CD8-positive, alpha-beta T cell (primary cell): ENCODE measurements at regions of chr11 and their contacts with region 1.

Region 1: DNA sequence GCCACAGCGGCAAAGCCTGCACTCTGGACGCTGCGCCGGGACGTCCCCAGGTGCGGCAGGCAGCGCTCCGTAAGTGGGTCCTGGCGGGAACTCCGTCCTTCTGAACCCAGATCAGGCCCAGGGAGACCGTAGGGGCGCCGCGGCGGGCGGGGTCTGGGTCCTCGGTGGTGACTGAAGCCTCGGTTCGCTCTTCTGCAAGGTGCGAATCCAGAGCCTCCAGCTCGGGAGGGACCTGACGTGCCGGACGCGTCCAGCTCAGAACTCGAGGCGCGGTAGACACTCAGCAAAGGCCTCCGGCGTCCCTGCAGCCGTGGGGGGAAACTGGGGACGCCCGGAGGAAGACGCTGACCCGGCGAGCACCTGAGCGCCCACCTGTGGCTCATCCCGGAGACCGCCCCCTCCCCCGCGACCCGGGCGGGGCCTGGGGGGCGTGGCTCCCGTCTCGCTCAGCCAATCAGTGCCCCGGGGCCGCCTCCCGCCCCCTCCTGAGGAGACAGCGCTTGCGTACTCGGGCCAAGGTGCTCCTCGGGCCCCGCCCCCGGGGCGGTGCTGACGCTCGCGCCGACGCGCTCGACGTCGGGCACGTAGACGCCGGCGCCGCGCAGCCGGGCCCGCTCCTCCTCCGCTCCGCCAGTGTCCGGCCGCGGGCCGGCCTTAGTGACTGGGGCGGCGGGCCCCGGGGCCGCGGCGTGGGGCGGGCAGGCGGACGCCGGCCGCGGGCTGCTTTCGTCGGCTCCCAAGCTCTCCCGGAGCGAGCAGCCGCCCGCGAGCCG is at the start of gene PPFIA1:
- DNase-seq: peak; percentile 89 to 98 (median 96)
- ATAC-seq: peak; percentile 96
- H3K4me3 ChIP-seq: peak within 1 kb of the TSS; percentile 88 to 90
- H3K4me3 Mint-ChIP-seq: peak within 1 kb of the TSS; percentile 89
- H3K27ac ChIP-seq: peak within 1 kb of the TSS; percentile 53 to 55
- H3K27ac Mint-ChIP-seq: peak within 1 kb of the TSS; percentile 84
- H3K4me1 ChIP-seq: peaks cover 10% of the 10 kb centered on the region
- H3K4me1 Mint-ChIP-seq: peaks cover 44% of the 10 kb centered on the region
- H3K27me3 ChIP-seq: peaks cover 0 to 6% of the 10 kb centered on the region in 2 experiments
- H3K27me3 Mint-ChIP-seq: peaks cover 13% of the 10 kb centered on the region
- CTCF ChIP-seq: peak; percentile 2
- total RNA-seq, gene PPFIA1: 36.3 to 40.4 TPM

Region 2: GRCh38 chr11:68878022-68878421 is 1392.3 kb before region 1 on chr11:
- CTCF ChIA-PET with region 1: no interaction called
- POLR2A ChIA-PET with region 1: no interaction called
- intact Hi-C with region 1: no loop called
- DNase-seq: no peak
- ATAC-seq: no peak
- H3K4me3 ChIP-seq: no peak overlapping the region
- H3K4me3 Mint-ChIP-seq: no peak overlapping the region
- H3K27ac ChIP-seq: no peak overlapping the region
- H3K27ac Mint-ChIP-seq: no peak overlapping the region
- H3K4me1 ChIP-seq: no peaks in the 10 kb centered on the region
- H3K4me1 Mint-ChIP-seq: no peaks in the 10 kb centered on the region
- H3K27me3 ChIP-seq: no peaks in the 10 kb centered on the region
- H3K27me3 Mint-ChIP-seq: no peaks in the 10 kb centered on the region
- CTCF ChIP-seq: no peak

Region 3: DNA sequence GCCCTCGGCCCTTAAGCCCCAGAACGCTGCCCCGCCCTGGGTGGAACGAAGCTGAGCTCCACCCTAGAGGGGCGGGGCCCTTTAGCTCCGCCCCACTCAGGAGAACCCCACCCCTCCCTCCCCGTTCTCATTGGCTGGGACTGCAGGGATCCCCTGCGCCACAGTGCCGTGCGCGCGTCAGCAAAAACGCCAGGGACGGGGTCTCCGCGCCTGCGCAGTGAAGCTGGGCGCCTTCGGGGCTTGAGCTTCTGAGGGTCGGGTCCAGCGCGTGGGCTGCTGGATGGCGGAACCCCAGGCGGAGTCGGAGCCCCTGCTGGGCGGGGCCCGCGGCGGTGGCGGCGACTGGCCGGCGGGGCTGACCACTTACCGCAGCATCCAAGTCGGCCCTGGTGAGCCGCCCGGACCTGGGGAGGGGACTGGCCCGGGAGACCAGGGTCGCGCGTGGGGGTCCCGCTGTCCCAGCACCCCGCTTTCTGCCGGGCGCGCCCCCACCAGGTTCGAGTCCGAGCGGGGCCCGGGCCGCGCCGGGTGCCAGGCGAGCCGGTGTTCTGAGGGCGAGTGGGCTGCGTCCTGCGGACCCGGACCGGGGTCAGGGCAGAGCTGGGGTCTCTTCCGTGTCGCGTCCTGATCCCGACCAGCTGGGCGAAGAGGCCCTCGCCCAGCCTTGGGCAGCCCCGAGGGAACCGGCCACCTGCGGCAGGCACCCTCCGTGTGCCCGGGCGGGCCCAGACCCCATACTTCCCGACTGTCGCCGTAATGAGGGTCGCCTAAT is 1221.4 kb before region 1 on chr11 and contains the start of gene TPCN2:
- CTCF ChIA-PET with region 1: no interaction called
- POLR2A ChIA-PET with region 1: no interaction called
- intact Hi-C with region 1: loop called in 1 of 2 experiments (anchors 5 kb)
- DNase-seq: peak; percentile 79 to 98 (median 89)
- ATAC-seq: peak; percentile 98
- H3K4me3 ChIP-seq: peak within 1 kb of the TSS; percentile 61 to 70
- H3K4me3 Mint-ChIP-seq: peak within 1 kb of the TSS; percentile 79
- H3K27ac ChIP-seq: peak within 1 kb of the TSS; percentile 74 to 91
- H3K27ac Mint-ChIP-seq: peak within 1 kb of the TSS; percentile 92
- H3K4me1 ChIP-seq: peaks cover 9% of the 10 kb centered on the region
- H3K4me1 Mint-ChIP-seq: peaks cover 28% of the 10 kb centered on the region
- H3K27me3 ChIP-seq: no peaks in the 10 kb centered on the region
- H3K27me3 Mint-ChIP-seq: no peaks in the 10 kb centered on the region
- CTCF ChIP-seq: no peak
- total RNA-seq, gene TPCN2: 13.1 to 15.0 TPM

Region 4: DNA sequence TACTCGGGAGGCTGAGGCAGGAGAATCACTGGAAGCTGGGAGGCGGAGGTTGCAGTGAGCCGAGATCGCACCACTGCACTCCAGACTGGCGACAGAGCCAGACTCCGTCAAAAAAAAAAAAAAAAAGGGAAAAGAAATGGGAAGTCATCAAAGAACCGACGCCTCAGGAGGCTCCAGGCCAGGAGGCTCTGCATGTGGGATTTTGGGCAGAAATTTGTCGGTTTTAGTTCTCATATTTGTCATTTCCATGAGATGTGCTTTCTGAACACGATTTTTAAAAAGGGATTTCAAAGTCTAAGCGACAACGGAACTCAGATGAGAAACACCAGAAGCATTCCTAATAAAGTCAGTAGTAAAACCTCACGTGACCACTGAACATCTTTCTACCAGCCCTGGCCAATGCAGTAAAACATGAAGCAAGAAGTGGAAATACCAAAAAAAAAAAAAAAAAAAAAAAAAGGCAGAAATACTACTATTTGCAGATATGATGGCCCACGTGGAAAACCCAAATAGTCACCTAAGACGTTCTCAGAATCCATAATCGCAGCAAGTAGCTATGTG is 594.4 kb before region 1 on chr11:
- CTCF ChIA-PET with region 1: no interaction called
- POLR2A ChIA-PET with region 1: no interaction called
- intact Hi-C with region 1: loop called (anchors 1 to 5 kb)
- DNase-seq: no peak
- ATAC-seq: no peak
- H3K4me3 ChIP-seq: peak overlapping the region; percentile 68 to 100
- H3K4me3 Mint-ChIP-seq: peak overlapping the region; percentile 94
- H3K27ac ChIP-seq: no peak overlapping the region
- H3K27ac Mint-ChIP-seq: no peak overlapping the region
- H3K4me1 ChIP-seq: peaks cover 31% of the 10 kb centered on the region
- H3K4me1 Mint-ChIP-seq: peaks cover 26% of the 10 kb centered on the region
- H3K27me3 ChIP-seq: no peaks in the 10 kb centered on the region
- H3K27me3 Mint-ChIP-seq: peaks cover 2% of the 10 kb centered on the region
- CTCF ChIP-seq: no peak

Region 5: GRCh38 chr11:70397983-70398833 is 127.9 kb after region 1 on chr11 and contains the start of gene CTTN:
- CTCF ChIA-PET with region 1: no interaction called
- POLR2A ChIA-PET with region 1: no interaction called
- intact Hi-C with region 1: loop called in 1 of 2 experiments (anchors 5 kb)
- DNase-seq: peak; percentile 14 to 67 (median 52)
- ATAC-seq: peak; percentile 71
- H3K4me3 ChIP-seq: peak within 1 kb of the TSS; percentile 39 to 44
- H3K4me3 Mint-ChIP-seq: peak within 1 kb of the TSS; percentile 83
- H3K27ac ChIP-seq: no peak within 1 kb of the TSS
- H3K27ac Mint-ChIP-seq: peak within 1 kb of the TSS; percentile 52
- H3K4me1 ChIP-seq: peaks cover 18% of the 10 kb centered on the region
- H3K4me1 Mint-ChIP-seq: peaks cover 10% of the 10 kb centered on the region
- H3K27me3 ChIP-seq: peaks cover 24 to 36% of the 10 kb centered on the region in 2 experiments
- H3K27me3 Mint-ChIP-seq: peaks cover 32% of the 10 kb centered on the region
- CTCF ChIP-seq: no peak
- total RNA-seq, gene CTTN: 0.27 to 0.36 TPM

Region 6: DNA sequence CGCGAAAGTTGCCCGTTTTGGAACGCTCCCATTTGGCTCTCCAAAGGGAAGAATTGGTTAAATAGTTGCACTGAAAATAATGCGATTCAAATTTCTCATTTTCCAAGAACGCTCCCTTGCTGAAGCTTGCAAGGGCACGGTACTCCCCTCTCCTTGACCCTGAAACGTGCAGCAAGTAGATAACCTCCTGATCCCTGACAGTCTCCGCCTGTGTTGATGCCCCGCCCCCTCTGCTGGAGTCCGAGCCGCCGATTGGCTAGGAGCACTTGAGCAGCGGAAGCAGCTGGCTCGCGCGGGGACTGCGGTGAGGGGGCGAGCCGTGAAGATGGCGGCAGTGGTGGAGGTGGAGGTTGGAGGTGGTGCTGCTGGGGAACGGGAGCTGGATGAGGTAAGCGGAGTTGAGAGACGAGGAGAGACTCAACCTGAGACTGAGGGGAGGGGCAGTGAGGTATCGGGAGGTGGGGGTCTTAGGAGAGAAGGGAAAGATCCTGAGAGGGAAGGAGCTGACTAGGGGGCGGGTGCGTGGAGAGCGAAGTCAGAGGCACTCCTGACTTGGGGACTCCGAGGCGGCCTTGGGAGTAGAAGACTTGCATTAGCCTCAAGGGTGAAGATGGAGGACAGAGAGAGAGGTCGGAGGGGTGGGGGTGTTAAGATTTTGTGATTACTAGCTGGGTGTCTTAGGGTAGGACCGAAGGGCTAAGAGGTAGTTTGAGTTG is 1658.6 kb after region 1 on chr11 and contains the start of gene RNF121:
- CTCF ChIA-PET with region 1: no interaction called
- POLR2A ChIA-PET with region 1: no interaction called
- intact Hi-C with region 1: loop called in 1 of 2 experiments (anchors 5 kb)
- DNase-seq: peak; percentile 94 to 99 (median 97)
- ATAC-seq: peak; percentile 86
- H3K4me3 ChIP-seq: peak within 1 kb of the TSS; percentile 67 to 98
- H3K4me3 Mint-ChIP-seq: peak within 1 kb of the TSS; percentile 100
- H3K27ac ChIP-seq: peak within 1 kb of the TSS; percentile 90 to 96
- H3K27ac Mint-ChIP-seq: peak within 1 kb of the TSS; percentile 99
- H3K4me1 ChIP-seq: peaks cover 22% of the 10 kb centered on the region
- H3K4me1 Mint-ChIP-seq: peaks cover 57% of the 10 kb centered on the region
- H3K27me3 ChIP-seq: no peaks in the 10 kb centered on the region
- H3K27me3 Mint-ChIP-seq: no peaks in the 10 kb centered on the region
- CTCF ChIP-seq: no peak
- total RNA-seq, gene RNF121: 8.5 to 9.0 TPM